ENCODE measurements at regions of chr12 and their contacts with region 1.

Region 1: DNA sequence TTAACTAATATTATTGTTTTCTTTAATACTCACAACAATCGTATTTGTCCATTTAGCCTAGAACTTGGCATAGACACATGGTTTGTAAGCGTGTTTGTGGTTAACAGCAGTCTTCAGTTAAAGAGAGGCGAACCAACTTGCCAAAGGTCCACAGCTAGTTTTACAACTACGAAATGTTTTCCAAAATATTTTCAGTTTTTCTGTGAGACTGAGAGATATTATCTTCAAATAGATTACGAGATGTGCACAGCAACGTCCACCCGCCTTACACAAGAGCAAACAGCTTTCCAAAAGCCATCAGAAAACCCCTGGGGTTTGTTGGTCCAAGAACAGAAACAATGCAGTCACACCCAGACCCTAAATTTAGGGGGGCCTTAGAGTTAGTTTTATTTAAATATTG is 58.6 kb upstream of the RASSF3 start:
- DNase-seq: no peak
- ATAC-seq: no peak
- H3K4me3 ChIP-seq: no peak overlapping the region
- H3K27ac ChIP-seq: no peak overlapping the region
- H3K4me1 ChIP-seq: peaks cover 0 to 5% of the 10 kb centered on the region in 2 experiments; a peak in 1 of 4 replicates
- H3K27me3 ChIP-seq: no peaks in the 10 kb centered on the region
- CTCF ChIP-seq: no peak
- POLR2A ChIP-seq: no peak
- RAD21 ChIP-seq: no peak

Region 2: GRCh38 chr12:64538121-64538520 is 13.6 kb before region 1 on chr12:
- CTCF ChIA-PET with region 1: interaction called, 14 read pairs
- POLR2A ChIA-PET with region 1: no interaction called
- RAD21 ChIA-PET with region 1: no interaction called
- intact Hi-C with region 1: no loop called
- DNase-seq: no peak
- ATAC-seq: no peak
- H3K4me3 ChIP-seq: no peak overlapping the region
- H3K27ac ChIP-seq: no peak overlapping the region
- H3K4me1 ChIP-seq: no peaks in the 10 kb centered on the region
- H3K27me3 ChIP-seq: no peaks in the 10 kb centered on the region
- CTCF ChIP-seq: no peak
- POLR2A ChIP-seq: no peak
- RAD21 ChIP-seq: no peak

Region 3: GRCh38 chr12:64610149-64610678 is 58.5 kb after region 1 on chr12 and contains the start of gene RASSF3:
- CTCF ChIA-PET with region 1: interaction called, 22 read pairs
- POLR2A ChIA-PET with region 1: interaction called, 3 read pairs
- RAD21 ChIA-PET with region 1: interaction called in 1 of 2 experiments, 3 read pairs
- intact Hi-C with region 1: loop called (anchors 1 kb)
- DNase-seq: peak; percentile 38
- ATAC-seq: peak; percentile 69
- H3K4me3 ChIP-seq: peak within 1 kb of the TSS; percentile 89 to 96
- H3K27ac ChIP-seq: peak within 1 kb of the TSS; percentile 81
- H3K4me1 ChIP-seq: peaks cover 13 to 40% of the 10 kb centered on the region in 2 experiments
- H3K27me3 ChIP-seq: no peaks in the 10 kb centered on the region
- CTCF ChIP-seq: no peak
- POLR2A ChIP-seq: no peak
- RAD21 ChIP-seq: no peak
- total RNA-seq, gene RASSF3: 67.1 TPM

Region 4: DNA sequence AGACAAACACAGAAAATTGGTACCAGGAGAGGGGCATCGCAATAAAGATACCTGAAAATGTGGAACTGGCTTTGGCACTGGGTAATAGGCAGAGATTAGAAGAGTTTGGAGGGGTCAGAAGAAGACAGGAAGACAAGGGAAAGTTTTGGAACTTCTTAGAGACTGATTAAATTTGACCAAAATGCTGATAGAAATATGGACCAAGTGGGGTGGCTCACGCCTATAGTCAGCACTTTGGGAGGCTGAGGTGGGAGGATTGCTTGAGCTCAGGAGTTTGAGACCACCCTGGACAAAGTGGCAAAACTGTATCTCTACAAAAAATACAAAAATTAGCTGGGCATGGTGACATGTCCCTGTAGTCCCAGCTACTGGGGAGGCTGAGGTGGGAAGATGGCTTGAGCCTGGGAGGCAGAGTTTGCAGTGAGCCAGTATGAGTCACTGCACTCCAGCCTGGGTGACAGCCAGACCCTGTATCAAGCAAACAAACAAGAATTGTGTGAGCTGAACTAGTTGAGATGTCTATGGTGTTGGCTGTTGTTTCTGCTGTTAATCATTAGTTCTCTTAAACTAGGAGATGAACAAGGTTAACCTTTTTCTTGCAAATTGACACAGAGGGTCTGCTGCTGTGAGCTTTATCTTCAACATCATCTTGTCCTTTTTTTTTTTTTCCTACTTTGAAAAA is 82.1 kb after region 1 on chr12:
- CTCF ChIA-PET with region 1: no interaction called
- POLR2A ChIA-PET with region 1: no interaction called
- RAD21 ChIA-PET with region 1: no interaction called
- intact Hi-C with region 1: no loop called
- DNase-seq: no peak
- ATAC-seq: peak; percentile 89
- H3K4me3 ChIP-seq: no peak overlapping the region
- H3K27ac ChIP-seq: peak overlapping the region; percentile 19; the same call in 1 of the 2 replicates
- H3K4me1 ChIP-seq: peaks cover 31 to 36% of the 10 kb centered on the region in 2 experiments
- H3K27me3 ChIP-seq: no peaks in the 10 kb centered on the region
- CTCF ChIP-seq: no peak
- POLR2A ChIP-seq: no peak
- RAD21 ChIP-seq: no peak

Region 5: GRCh38 chr12:64679487-64679983 is 127.8 kb after region 1 on chr12:
- CTCF ChIA-PET with region 1: interaction called, 6 read pairs
- POLR2A ChIA-PET with region 1: no interaction called
- RAD21 ChIA-PET with region 1: interaction called in 1 of 2 experiments, 3 read pairs
- intact Hi-C with region 1: loop called (anchors 1 kb)
- DNase-seq: peak; percentile 74
- ATAC-seq: peak; percentile 86
- H3K4me3 ChIP-seq: peak overlapping the region; percentile 17 to 44
- H3K27ac ChIP-seq: peak overlapping the region; percentile 66
- H3K4me1 ChIP-seq: peaks cover 64 to 73% of the 10 kb centered on the region in 2 experiments
- H3K27me3 ChIP-seq: no peaks in the 10 kb centered on the region
- CTCF ChIP-seq: no peak
- POLR2A ChIP-seq: no peak
- RAD21 ChIP-seq: 0 out of 2 replicates have a peak, but pooled peaks have one; percentile 3

Region 6: GRCh38 chr12:64796208-64796845 is 244.6 kb after region 1 on chr12:
- CTCF ChIA-PET with region 1: interaction called, 10 read pairs
- POLR2A ChIA-PET with region 1: no interaction called
- RAD21 ChIA-PET with region 1: interaction called in 1 of 2 experiments, 5 read pairs
- intact Hi-C with region 1: no loop called
- DNase-seq: peak; percentile 83
- ATAC-seq: peak; percentile 96
- H3K4me3 ChIP-seq: no peak overlapping the region
- H3K27ac ChIP-seq: no peak overlapping the region; the same call in 1 of the 2 replicates
- H3K4me1 ChIP-seq: peaks cover 0 to 11% of the 10 kb centered on the region in 2 experiments; a peak in 2 of 4 replicates
- H3K27me3 ChIP-seq: no peaks in the 10 kb centered on the region
- CTCF ChIP-seq: peak; percentile 76 to 93 (median 83)
- POLR2A ChIP-seq: no peak
- RAD21 ChIP-seq: peak; percentile 63

Region 7: GRCh38 chr12:64801381-64801780 is 249.7 kb after region 1 on chr12:
- CTCF ChIA-PET with region 1: interaction called, 10 read pairs
- POLR2A ChIA-PET with region 1: no interaction called
- RAD21 ChIA-PET with region 1: interaction called in 1 of 2 experiments, 5 read pairs
- intact Hi-C with region 1: no loop called
- DNase-seq: no peak
- ATAC-seq: peak; percentile 80
- H3K4me3 ChIP-seq: no peak overlapping the region
- H3K27ac ChIP-seq: no peak overlapping the region
- H3K4me1 ChIP-seq: peaks cover 0 to 9% of the 10 kb centered on the region in 2 experiments; a peak in 2 of 4 replicates
- H3K27me3 ChIP-seq: no peaks in the 10 kb centered on the region
- CTCF ChIP-seq: peak; percentile 57 to 98 (median 70)
- POLR2A ChIP-seq: no peak
- RAD21 ChIP-seq: peak; percentile 47; the same call in 1 of the 2 replicates

Measured in HCT116 (cell line).